PC-9 (cell line): ENCODE measurements at regions of chr3 and their contacts with region 1.

Region 1: GRCh38 chr3:153026026-153026425 is 136.0 kb upstream of the RAP2B start:
- DNase-seq: no peak
- H3K4me3 ChIP-seq: no peak overlapping the region
- H3K27ac ChIP-seq: no peak overlapping the region
- H3K4me1 ChIP-seq: no peaks in the 10 kb centered on the region
- H3K27me3 ChIP-seq: no peaks in the 10 kb centered on the region
- CTCF ChIP-seq: peak; percentile 95

Region 2: DNA sequence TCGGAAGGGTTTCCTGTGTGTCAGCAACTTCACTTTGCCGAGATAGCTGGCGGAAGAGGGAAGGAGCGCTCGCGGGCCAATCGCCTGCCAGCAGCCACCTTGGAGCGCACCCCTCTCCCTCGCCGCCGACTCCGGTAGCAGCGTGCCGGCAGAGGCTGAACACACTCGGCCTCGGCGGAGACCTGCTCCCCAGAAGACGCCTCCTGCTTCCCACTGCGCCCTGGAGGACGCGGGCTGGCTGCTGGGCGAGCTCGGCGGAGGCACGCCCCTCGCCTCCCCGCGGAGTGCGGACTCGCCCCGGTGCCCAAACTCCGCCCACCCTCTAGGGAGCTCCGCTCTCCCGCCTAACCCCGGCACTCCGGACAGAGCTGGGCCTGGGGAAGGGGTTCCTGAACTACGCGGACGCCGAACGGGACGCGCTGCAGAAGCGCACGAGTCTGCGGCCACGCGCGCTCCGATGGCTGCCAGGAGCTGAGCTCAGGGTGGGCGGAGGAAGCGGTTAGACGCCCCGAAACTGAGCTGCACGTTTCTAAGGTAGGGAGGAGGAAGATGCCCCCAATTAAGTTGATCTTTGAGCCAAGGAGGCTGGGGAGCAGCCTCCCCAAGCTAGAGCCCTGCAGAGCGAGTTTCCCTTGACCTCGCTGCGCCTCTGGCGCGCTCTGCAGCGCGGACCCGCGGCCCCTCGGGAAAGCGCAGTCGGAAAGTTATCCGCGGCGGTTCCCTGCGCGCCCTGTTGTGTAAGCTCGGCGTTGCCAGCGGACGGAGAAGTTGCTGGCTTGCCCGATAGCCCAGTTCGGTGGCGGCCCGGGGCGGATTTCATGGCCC is 191.0 kb before region 1 on chr3 and contains the start of gene P2RY1:
- CTCF ChIA-PET with region 1: no interaction called
- POLR2A ChIA-PET with region 1: no interaction called
- intact Hi-C with region 1: loop called (anchors 10 kb)
- DNase-seq: peak; percentile 59 to 85
- H3K4me3 ChIP-seq: peak within 1 kb of the TSS; percentile 94
- H3K27ac ChIP-seq: peak within 1 kb of the TSS; percentile 16; the same call in 1 of the 2 replicates
- H3K4me1 ChIP-seq: peaks cover 9% of the 10 kb centered on the region
- H3K27me3 ChIP-seq: no peaks in the 10 kb centered on the region
- CTCF ChIP-seq: no peak; the same call in 1 of the 2 replicates
- total RNA-seq, gene P2RY1: 0.88 and 1.2 TPM in 2 replicates

Region 3: DNA sequence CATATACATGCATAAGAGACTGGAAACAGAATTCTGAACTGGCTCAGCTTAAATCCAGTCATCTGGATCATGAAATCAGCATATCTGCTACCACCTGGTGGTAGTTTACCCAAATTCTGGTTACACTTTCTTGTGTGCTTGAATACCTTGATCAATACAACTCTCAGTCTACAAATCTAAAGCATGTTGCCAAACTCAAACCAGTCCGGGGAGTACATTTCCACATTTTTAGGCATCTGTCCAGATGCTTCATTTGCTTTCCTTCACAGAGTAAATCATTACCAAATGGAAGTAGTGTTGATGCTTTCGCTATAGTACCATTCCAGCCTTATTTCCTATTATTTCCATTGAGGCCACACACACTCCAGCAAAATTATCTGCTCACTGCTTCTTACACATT is 64.7 kb before region 1 on chr3:
- CTCF ChIA-PET with region 1: no interaction called
- POLR2A ChIA-PET with region 1: no interaction called
- intact Hi-C with region 1: no loop called
- DNase-seq: peak in 1 of 2 experiments; percentile 56
- H3K4me3 ChIP-seq: no peak overlapping the region
- H3K27ac ChIP-seq: no peak overlapping the region
- H3K4me1 ChIP-seq: peaks cover 33% of the 10 kb centered on the region
- H3K27me3 ChIP-seq: no peaks in the 10 kb centered on the region
- CTCF ChIP-seq: peak; percentile 62

Region 4: DNA sequence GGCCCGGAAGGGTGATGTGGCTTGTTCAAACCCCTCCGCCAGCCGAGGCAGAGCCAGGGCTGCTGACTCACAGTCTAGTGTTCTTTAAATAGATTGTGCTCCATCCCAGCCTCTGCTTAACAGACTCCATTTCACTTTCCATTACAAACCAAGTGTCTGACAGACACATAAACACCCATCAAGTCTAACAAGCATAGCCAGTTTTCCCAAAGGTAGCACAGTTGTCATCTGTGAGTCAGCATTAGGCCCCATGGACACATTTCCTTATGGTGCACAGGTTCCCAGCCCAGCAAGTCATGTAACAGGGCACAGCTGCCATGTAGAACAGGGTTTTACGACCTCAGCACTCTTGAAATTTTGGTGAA is 26.1 kb after region 1 on chr3:
- CTCF ChIA-PET with region 1: no interaction called
- POLR2A ChIA-PET with region 1: no interaction called
- intact Hi-C with region 1: no loop called
- DNase-seq: peak; percentile 77 to 100
- H3K4me3 ChIP-seq: peak overlapping the region; percentile 48; the same call in 1 of the 2 replicates
- H3K27ac ChIP-seq: peak overlapping the region; percentile 98
- H3K4me1 ChIP-seq: peaks cover 45% of the 10 kb centered on the region
- H3K27me3 ChIP-seq: no peaks in the 10 kb centered on the region
- CTCF ChIP-seq: no peak

Region 5: DNA sequence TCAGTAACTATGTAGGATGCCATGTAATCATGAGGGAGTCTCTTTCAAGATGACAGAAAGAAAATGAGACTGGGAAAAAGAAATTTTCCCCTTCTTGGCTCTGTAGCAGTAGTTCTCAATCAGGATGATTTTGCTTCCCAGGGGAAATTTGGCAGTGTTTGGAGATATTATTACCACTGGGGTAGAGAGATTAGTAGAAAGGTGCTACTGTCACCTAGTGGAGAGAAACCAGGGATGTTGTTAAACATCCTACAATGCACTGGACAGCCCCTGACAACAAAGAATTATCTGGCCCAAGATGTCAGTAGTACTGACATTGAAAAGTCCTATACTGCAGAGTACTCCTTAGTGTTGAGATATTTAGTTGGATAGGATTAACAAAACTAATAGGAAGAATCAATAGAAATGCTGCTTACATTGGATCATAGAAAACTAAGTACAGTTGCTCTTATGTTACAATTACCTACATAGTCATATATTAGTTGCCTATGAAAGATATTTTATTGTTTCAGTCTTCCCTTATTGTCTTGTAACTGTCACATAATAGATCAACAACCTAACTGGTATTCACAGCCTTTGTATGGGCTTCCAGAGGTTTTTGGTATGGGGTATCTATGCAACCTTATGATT is 569.3 kb after region 1 on chr3:
- CTCF ChIA-PET with region 1: no interaction called
- POLR2A ChIA-PET with region 1: no interaction called
- intact Hi-C with region 1: loop called (anchors 1 kb)
- DNase-seq: no peak
- H3K4me3 ChIP-seq: no peak overlapping the region
- H3K27ac ChIP-seq: no peak overlapping the region
- H3K4me1 ChIP-seq: peaks cover 16% of the 10 kb centered on the region
- H3K27me3 ChIP-seq: no peaks in the 10 kb centered on the region
- CTCF ChIP-seq: peak; percentile 83

Region 6: DNA sequence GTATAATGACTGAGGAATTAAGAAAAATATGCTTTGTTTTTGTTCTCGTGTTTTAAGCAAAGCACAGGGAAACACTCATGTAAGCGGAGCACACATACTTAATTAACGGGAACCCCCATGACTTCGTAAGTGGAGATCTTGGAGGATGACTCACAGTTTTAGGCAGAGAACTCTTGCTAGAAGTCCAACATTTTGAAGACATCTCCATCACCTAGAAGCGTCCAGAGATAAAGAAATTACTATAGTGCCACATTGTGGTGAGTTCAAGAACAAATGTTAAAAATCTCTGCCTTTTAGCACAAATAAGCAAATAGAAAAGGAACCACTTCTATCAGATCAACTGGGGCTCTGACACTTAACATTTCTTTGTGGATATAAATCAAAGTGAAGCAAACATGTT is 901.1 kb after region 1 on chr3:
- CTCF ChIA-PET with region 1: no interaction called
- POLR2A ChIA-PET with region 1: no interaction called
- intact Hi-C with region 1: loop called (anchors 1 kb)
- DNase-seq: no peak
- H3K4me3 ChIP-seq: no peak overlapping the region
- H3K27ac ChIP-seq: no peak overlapping the region
- H3K4me1 ChIP-seq: no peaks in the 10 kb centered on the region
- H3K27me3 ChIP-seq: no peaks in the 10 kb centered on the region
- CTCF ChIP-seq: peak; percentile 60

Region 7: DNA sequence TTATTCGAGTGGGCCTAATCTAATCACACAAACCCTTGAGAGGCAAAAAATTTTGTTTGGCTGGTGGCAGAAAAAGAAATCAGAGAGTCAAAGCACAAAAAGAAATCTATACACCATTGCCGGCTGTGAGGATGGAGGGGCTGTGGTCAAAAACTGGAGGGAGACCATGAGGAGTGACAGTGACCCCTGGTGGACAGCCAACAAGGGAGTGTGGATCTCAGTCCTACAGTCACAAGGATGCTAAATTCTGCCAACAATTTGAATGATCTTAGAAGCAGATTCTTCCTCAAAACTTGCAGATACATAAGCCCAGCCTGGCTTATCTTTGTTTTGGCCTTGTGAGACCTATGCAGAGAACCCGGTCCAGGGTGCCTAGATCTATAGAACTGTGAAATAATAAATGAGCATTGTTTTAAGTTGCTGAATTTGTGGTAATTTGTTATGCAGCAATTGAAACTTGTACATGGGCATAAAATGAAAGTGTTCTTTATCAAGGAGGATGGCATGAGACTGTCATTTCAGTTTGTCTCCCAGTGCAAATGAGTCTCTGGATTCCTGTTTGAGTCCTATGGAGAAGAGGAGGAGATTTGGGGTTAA is 992.2 kb after region 1 on chr3:
- CTCF ChIA-PET with region 1: no interaction called
- POLR2A ChIA-PET with region 1: no interaction called
- intact Hi-C with region 1: loop called (anchors 5 kb)
- DNase-seq: peak in 1 of 2 experiments; percentile 10
- H3K4me3 ChIP-seq: no peak overlapping the region
- H3K27ac ChIP-seq: no peak overlapping the region
- H3K4me1 ChIP-seq: no peaks in the 10 kb centered on the region; the same call in 1 of the 2 replicates
- H3K27me3 ChIP-seq: no peaks in the 10 kb centered on the region
- CTCF ChIP-seq: peak; percentile 72